ENCODE measurements at regions of chr4 and their contacts with region 1.

Region 1: DNA sequence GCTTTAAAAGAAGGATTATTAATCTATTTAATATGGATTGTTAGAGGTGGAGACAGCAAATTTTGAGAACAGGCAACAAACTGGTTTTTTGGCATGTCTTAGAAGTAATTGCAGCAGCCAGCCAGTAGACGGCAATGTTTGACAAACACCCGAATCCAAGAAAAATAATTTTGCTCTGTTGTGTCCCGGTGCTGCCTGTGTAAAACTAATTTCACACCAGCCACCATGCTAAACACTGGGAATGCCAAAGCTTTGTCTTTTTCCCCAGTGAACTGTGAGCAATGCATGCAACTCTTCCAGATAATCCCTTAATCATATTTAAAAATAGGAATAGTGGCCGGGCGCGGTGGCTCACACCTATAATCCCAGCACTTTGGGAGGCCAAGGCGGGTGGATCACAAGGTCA is 25.9 kb downstream of the SMIM31 start:
- DNase-seq: peak in 2 of 9 experiments; percentile 18 to 40
- ATAC-seq: no peak
- H3K4me3 ChIP-seq: no peak overlapping the region
- H3K4me3 Mint-ChIP-seq: no peak overlapping the region
- H3K27ac ChIP-seq: no peak overlapping the region
- H3K27ac Mint-ChIP-seq: no peak overlapping the region
- H3K4me1 ChIP-seq: no peaks in the 10 kb centered on the region
- H3K4me1 Mint-ChIP-seq: no peaks in the 10 kb centered on the region
- H3K27me3 ChIP-seq: no peaks in the 10 kb centered on the region
- H3K27me3 Mint-ChIP-seq: no peaks in the 10 kb centered on the region
- CTCF ChIP-seq: peak; percentile 66

Region 2: DNA sequence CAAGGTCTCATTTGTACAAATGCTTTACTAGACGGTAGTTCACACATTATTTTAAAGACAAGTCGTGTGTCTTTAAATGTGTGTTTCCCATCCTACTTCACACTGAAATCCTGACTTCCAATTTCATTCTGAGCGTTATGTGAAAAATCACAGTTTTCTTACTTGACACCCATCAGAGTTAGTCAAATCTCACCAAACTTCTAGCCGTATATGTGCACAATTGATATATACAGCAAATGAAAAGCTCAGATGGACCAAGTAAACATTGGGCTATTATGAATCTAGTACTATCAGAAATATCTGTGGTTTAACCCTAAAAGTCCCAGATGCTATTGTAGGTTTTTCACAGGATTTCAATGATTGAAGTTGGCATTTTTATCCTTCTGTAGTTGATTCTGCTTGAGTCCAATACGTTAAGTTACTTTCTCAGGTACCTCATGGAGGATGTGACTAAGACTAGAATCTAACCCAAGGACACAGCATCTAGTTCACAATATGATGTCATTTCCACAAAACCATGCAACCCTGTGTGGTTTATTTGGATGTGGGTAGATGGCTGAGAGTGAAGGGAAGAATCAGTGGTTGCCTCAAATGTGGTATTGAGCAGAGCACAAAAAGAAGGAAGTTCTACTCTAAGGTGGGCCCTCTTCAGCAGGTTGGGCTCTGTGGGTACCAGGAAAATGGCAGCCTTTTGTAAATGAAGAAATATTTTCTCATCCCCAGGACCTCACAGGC is 229.8 kb after region 1 on chr4:
- CTCF ChIA-PET with region 1: no interaction called
- POLR2A ChIA-PET with region 1: no interaction called
- intact Hi-C with region 1: loop called in 1 of 2 experiments (anchors 10 kb)
- DNase-seq: peak in 1 of 9 experiments; percentile 36
- ATAC-seq: no peak
- H3K4me3 ChIP-seq: no peak overlapping the region
- H3K4me3 Mint-ChIP-seq: no peak overlapping the region
- H3K27ac ChIP-seq: no peak overlapping the region
- H3K27ac Mint-ChIP-seq: no peak overlapping the region
- H3K4me1 ChIP-seq: no peaks in the 10 kb centered on the region
- H3K4me1 Mint-ChIP-seq: no peaks in the 10 kb centered on the region
- H3K27me3 ChIP-seq: no peaks in the 10 kb centered on the region
- H3K27me3 Mint-ChIP-seq: peaks cover 19% of the 10 kb centered on the region
- CTCF ChIP-seq: no peak

Region 3: GRCh38 chr4:165096776-165097175 is 317.0 kb after region 1 on chr4:
- CTCF ChIA-PET with region 1: no interaction called
- POLR2A ChIA-PET with region 1: no interaction called
- intact Hi-C with region 1: loop called (anchors 5 kb)
- DNase-seq: peak in 2 of 9 experiments; percentile 10 to 15
- ATAC-seq: no peak
- H3K4me3 ChIP-seq: no peak overlapping the region
- H3K4me3 Mint-ChIP-seq: no peak overlapping the region
- H3K27ac ChIP-seq: no peak overlapping the region
- H3K27ac Mint-ChIP-seq: no peak overlapping the region
- H3K4me1 ChIP-seq: no peaks in the 10 kb centered on the region
- H3K4me1 Mint-ChIP-seq: no peaks in the 10 kb centered on the region
- H3K27me3 ChIP-seq: no peaks in the 10 kb centered on the region
- H3K27me3 Mint-ChIP-seq: no peaks in the 10 kb centered on the region
- CTCF ChIP-seq: peak; percentile 48

Region 4: GRCh38 chr4:165378745-165379677 is 599.2 kb after region 1 on chr4 and contains the start of gene CPE:
- CTCF ChIA-PET with region 1: no interaction called
- POLR2A ChIA-PET with region 1: no interaction called
- intact Hi-C with region 1: no loop called
- DNase-seq: peak; percentile 15 to 68 (median 49)
- ATAC-seq: peak; percentile 98
- H3K4me3 ChIP-seq: peak within 1 kb of the TSS; percentile 4 to 6
- H3K4me3 Mint-ChIP-seq: peak within 1 kb of the TSS; percentile 75
- H3K27ac ChIP-seq: no peak within 1 kb of the TSS
- H3K27ac Mint-ChIP-seq: no peak within 1 kb of the TSS
- H3K4me1 ChIP-seq: no peaks in the 10 kb centered on the region
- H3K4me1 Mint-ChIP-seq: peaks cover 15% of the 10 kb centered on the region
- H3K27me3 ChIP-seq: peaks cover 0 to 8% of the 10 kb centered on the region in 2 experiments
- H3K27me3 Mint-ChIP-seq: peaks cover 63% of the 10 kb centered on the region
- CTCF ChIP-seq: no peak
- total RNA-seq, gene CPE: not detected

Measured in CD8-positive, alpha-beta T cell (primary cell).